Calu3 (cell line): ENCODE measurements at regions of chr10 and their contacts with region 1.

Region 1: DNA sequence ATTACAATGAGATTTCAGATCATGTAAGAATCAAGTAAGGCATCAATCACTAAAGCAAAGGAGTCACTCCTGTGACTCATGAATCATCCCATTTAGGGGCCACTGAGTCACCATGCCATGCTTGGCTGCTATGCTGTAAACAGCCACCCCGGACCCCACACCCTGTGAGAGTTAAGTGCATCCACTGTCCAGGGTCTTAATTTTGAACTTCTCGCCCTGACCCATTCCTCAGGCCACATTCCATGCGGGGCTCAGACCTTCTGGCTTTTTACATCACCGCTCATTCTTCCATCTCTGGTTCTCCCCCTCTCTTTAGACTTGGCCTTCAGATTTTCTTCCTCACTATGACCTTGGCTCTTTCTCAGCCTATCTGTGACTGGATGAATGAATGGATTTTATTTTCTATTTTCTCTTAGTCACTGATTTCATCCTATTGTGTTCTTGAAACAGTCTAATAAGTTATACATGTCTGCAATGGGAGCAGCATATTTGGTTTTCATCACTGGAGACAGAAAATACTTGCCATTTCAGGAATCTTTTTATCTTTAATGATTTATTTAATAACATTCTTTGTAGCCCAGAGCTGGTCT is 239.6 kb downstream of the SKIDA1 start:
- DNase-seq: no peak
- H3K4me3 Mint-ChIP-seq: no peak overlapping the region
- H3K27ac Mint-ChIP-seq: no peak overlapping the region
- H3K4me1 Mint-ChIP-seq: peaks cover 28% of the 10 kb centered on the region
- H3K27me3 Mint-ChIP-seq: no peaks in the 10 kb centered on the region
- CTCF ChIP-seq: no peak

Region 2: GRCh38 chr10:21242915-21243314 is 42.9 kb before region 1 on chr10:
- CTCF ChIA-PET with region 1: no interaction called
- intact Hi-C with region 1: no loop called
- DNase-seq: no peak
- H3K4me3 Mint-ChIP-seq: no peak overlapping the region
- H3K27ac Mint-ChIP-seq: no peak overlapping the region
- H3K4me1 Mint-ChIP-seq: peaks cover 3% of the 10 kb centered on the region
- H3K27me3 Mint-ChIP-seq: no peaks in the 10 kb centered on the region
- CTCF ChIP-seq: no peak

Region 3: DNA sequence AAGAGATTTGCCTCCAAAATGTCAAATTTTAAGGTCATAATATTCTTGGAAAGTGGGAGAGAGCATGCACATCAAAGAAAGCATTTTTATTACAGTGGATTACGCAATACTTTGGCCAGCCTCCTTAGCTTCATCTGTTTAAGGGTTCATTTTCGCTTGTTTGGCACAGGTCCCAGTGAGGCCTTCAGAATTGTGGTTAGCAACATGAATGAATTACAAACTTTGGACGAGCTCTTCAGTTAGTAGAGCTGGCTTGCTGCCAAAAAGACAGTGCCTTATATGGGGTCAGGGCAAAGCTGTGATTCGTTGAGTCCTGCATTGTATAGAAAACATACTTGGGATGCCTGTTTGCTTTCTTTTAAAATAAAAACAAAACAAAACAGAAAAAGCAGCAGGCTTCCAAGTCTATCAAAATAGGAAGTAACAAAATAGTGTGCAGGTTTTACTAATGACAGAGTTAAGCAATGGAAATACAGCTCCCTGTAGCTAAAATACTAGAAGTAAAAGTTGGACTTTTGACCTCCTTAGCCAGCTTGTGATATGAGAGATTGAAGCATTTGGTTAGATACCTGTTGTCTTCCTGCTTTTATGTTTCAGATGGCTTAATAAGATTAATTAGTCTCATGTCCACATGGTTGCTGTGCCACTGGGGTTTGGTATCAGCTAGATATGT is 439.0 kb after region 1 on chr10:
- CTCF ChIA-PET with region 1: no interaction called
- intact Hi-C with region 1: loop called (anchors 10 kb)
- DNase-seq: peak; percentile 90
- H3K4me3 Mint-ChIP-seq: no peak overlapping the region
- H3K27ac Mint-ChIP-seq: peak overlapping the region; percentile 27
- H3K4me1 Mint-ChIP-seq: peaks cover 27% of the 10 kb centered on the region
- H3K27me3 Mint-ChIP-seq: no peaks in the 10 kb centered on the region
- CTCF ChIP-seq: no peak